ENCODE measurements at regions of chr1 and their contacts with region 1.

Region 1: DNA sequence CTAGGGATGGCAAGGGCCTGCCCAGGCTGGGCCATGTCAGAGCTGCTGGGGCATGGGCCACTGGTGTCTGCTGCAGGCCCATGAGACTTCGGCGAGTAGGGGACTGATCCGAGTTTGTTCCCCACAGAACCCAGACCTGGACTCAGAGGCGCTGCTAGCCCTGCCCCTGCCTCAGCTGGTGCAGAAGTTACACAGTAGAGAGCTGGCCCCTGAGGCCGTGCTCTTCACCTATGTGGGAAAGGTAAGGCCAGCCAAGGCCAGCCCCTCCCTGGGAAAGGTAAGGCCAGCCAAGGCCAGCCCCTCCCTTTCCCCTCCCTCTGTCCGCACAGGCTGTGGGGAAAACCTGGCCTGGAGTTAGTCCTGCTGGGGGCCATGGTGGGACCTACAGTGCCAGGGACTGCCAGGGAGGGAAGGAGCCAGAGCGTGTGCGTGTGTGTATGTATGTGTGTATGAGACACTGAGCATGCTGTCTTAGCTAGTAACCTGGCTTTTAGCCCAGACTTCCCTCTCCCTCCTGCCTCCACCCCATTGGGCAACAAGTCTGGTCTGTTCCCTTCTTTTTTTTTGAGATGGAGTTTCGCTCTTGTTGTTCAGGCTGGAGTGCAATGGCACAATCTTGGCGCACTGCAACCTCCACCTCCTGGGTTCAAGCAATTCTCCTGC is 8.0 kb downstream of the FAAH start:
- DNase-seq: peak; percentile 63 to 94 (median 84)

Region 2: GRCh38 chr1:46247436-46248121 is 154.5 kb before region 1 on chr1 and contains the start of gene RAD54L:
- intact Hi-C with region 1: no loop called
- DNase-seq: peak; percentile 94 to 99 (median 98)

Region 3: GRCh38 chr1:46675549-46676314 is 273.6 kb after region 1 on chr1:
- intact Hi-C with region 1: no loop called
- DNase-seq: no peak

Region 4: DNA sequence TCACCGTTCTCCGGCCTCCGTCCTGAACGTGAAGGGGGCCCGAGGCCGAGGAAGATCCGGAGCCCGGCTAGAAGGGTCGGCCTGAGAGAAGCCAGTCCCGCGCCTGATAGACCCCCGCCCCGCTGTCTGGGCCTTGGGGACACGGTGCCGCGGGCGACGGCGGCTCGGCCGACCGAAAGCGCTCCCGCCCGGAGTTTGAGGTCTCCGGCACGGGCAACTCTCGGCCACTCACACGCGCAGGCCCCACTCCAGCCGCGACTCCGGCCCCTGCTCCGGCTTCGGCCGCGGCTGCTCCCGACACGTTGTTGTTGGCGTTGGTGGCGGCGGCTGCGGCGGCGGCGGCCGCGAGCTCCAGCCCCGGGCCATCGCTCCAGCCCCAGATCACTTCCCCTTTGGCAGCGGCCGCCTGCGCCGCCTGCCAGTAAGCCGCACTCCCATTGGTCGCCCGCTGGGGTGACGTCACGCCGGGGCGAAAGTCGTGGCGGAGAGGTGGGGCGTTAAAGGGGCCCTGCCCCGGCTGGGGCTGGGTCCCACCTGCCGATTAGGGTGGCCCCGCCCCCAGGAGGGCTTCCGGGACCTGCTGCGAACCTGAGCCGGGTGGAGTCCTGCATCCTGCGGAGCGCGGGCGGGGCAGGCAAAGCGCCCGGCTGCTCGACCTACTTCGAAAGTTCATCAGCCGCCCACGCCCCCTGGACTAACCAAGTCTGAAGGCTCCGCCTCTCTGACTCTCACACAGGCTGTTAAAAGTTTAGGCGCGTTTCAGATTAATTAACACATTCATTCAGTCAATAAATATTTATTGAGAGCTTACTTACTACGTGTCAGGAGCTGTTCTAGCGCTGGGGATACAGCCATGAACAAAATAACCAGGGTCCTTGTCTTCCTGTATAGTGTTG is 316.9 kb after region 1 on chr1 and contains the start of gene EFCAB14:
- intact Hi-C with region 1: loop called (anchors 10 kb)
- DNase-seq: peak; percentile 86 to 99 (median 97)

Measured in head of caudate nucleus (tissue), 42 donors.